ENCODE measurements at regions of chr1 and their contacts with region 1.

Region 1: GRCh38 chr1:224116131-224116530 is 2.2 kb downstream of the FBXO28 start:
- DNase-seq: no peak
- H3K4me3 ChIP-seq: peak overlapping the region in 1 of 8 donors; percentile 88
- H3K27ac ChIP-seq: no peak overlapping the region
- H3K4me1 ChIP-seq: peaks cover 21 to 73% (median 34%) of the 10 kb centered on the region in 6 donors
- H3K27me3 ChIP-seq: no peaks in the 10 kb centered on the region
- CTCF ChIP-seq: peak; percentile 5 to 74 (median 57)
- POLR2A ChIP-seq: peak in 1 of 3 donors; percentile 17

Region 2: GRCh38 chr1:224168859-224169380 is 52.8 kb after region 1 on chr1:
- intact Hi-C with region 1: no loop called
- DNase-seq: no peak
- H3K4me3 ChIP-seq: peak overlapping the region in 1 of 8 donors; percentile 17
- H3K27ac ChIP-seq: peak overlapping the region; percentile 51 to 86 (median 80)
- H3K4me1 ChIP-seq: peaks cover 12 to 51% (median 28%) of the 10 kb centered on the region in 6 donors
- H3K27me3 ChIP-seq: no peaks in the 10 kb centered on the region
- CTCF ChIP-seq: no peak
- POLR2A ChIP-seq: no peak

Region 3: DNA sequence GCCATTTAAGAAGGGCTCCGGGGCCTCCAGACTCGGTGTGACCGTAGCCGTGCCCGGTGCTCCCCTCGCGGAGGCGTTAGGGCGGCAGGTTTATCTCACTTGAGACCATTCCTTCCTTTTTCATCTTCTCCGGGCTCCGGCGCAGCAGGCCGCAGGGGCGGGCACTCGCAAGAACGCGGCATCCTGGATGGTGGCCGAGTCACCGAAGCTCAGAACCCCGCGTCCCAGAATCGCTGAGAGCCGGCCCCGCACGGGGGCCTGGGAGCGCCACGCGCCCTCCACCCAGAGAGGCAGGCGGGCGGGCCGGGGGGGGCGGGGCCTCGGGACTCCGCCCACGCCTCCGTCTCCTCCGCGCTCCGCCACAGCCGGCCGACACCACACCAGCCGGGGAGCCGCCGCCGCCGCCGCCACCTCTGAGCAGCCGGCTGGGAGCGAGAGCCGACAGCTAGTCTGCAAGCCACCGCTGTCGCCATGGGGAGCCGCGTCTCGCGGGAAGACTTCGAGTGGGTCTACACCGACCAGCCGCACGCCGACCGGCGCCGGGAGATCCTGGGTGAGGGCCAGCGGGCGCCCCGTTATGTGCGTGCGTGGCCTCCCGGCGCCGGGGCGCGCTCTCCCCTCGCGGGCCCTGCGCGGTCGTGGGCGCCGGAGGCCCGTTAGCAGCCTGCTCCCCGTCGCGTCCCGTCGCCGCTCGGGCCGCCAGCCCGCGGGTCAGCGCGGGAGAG is 66.9 kb after region 1 on chr1 and contains the start of gene DEGS1:
- intact Hi-C with region 1: no loop called
- DNase-seq: peak; percentile 97
- H3K4me3 ChIP-seq: peak within 1 kb of the TSS; percentile 68 to 96 (median 88)
- H3K27ac ChIP-seq: peak within 1 kb of the TSS; percentile 96 to 99 (median 99)
- H3K4me1 ChIP-seq: peaks cover 9 to 66% (median 49%) of the 10 kb centered on the region in 6 donors
- H3K27me3 ChIP-seq: no peaks in the 10 kb centered on the region
- CTCF ChIP-seq: peak in 2 of 11 experiments; percentile 7 to 18
- POLR2A ChIP-seq: peak in 2 of 3 donors; percentile 65 to 94
- total RNA-seq, gene DEGS1: 48.8 to 102 (median 63.2) TPM

Region 4: GRCh38 chr1:224333309-224333926 is 217.3 kb after region 1 on chr1:
- intact Hi-C with region 1: loop called (anchors 2 kb)
- DNase-seq: no peak
- H3K4me3 ChIP-seq: no peak overlapping the region
- H3K27ac ChIP-seq: peak overlapping the region in 1 of 8 donors; percentile 4
- H3K4me1 ChIP-seq: peaks cover 16 to 40% (median 23%) of the 10 kb centered on the region in 6 donors
- H3K27me3 ChIP-seq: no peaks in the 10 kb centered on the region
- CTCF ChIP-seq: peak; percentile 39 to 82 (median 70)
- POLR2A ChIP-seq: no peak

Region 5: DNA sequence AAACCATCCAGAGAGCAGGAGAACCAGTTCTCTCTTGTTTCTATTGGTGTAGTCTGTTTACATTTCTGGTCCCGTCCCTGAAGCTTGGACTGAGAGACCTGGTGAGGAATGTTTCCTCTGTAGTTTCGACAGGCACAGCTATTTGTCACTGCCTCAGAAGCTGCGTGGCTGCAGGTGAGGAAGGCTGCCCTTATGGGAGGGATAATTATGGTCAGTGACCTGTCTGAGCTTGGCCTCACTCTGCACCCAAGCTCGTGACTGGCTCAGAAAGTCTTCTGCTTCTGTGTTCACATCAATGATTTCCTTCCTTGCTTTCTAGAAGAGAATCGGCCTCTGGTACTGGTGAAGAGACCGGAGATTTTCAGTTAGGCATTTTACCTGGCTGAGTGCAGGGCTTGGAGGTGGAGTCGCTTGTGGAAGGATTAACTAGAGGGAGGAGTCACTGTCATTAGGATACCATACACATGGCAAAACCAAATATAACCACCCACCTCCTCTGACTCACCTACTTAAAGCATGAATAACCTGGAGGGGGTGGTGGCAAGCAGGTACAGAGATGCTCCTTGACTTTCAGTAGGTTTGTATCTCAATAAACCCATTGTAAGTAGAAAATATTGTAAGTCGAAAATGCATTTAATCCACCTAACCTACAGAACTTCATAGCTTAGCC is 338.4 kb after region 1 on chr1:
- intact Hi-C with region 1: loop called (anchors 5 kb)
- DNase-seq: no peak
- H3K4me3 ChIP-seq: no peak overlapping the region
- H3K27ac ChIP-seq: no peak overlapping the region
- H3K4me1 ChIP-seq: peaks cover 7 to 36% (median 22%) of the 10 kb centered on the region in 6 donors
- H3K27me3 ChIP-seq: no peaks in the 10 kb centered on the region
- CTCF ChIP-seq: no peak
- POLR2A ChIP-seq: no peak

Measured in spleen (tissue), 13 donors.